ENCODE measurements at regions of chr16 and their contacts with region 1.

Region 1: DNA sequence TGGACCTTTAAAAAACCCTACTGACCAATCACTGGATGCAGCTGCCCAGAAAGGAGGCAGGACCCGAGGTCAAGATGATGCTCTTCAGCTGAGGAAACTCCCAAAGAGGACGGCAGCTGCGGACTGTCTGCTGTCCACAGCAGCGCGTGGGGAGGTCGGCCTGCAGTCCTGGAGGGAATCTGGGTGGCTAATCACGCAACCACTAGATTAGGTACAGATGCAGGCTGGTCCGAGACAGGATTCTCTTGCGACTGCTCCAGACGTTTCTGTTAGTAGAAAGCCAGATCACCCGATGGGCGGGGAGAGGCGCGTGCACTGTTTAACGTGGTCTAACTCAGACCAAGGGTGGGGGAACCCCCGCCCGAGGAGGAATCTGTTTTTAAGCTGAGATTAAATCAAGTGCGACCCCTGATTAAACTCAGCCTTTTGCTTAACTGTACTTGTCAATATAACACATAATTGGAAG is 8.8 kb downstream of the CTRB2 start:
- DNase-seq: peak; percentile 32
- H3K4me3 ChIP-seq: 0 out of 2 replicates have a peak overlapping the region, but pooled peaks have one; percentile 3
- H3K27me3 ChIP-seq: peaks cover 3% of the 10 kb centered on the region; the same call in 1 of the 2 replicates
- CTCF ChIP-seq: no peak

Region 2: GRCh38 chr16:75179208-75179607 is 19.0 kb before region 1 on chr16:
- CTCF ChIA-PET with region 1: no interaction called
- POLR2A ChIA-PET with region 1: no interaction called
- DNase-seq: no peak
- H3K4me3 ChIP-seq: no peak overlapping the region
- H3K27me3 ChIP-seq: no peaks in the 10 kb centered on the region
- CTCF ChIP-seq: no peak

Region 3: DNA sequence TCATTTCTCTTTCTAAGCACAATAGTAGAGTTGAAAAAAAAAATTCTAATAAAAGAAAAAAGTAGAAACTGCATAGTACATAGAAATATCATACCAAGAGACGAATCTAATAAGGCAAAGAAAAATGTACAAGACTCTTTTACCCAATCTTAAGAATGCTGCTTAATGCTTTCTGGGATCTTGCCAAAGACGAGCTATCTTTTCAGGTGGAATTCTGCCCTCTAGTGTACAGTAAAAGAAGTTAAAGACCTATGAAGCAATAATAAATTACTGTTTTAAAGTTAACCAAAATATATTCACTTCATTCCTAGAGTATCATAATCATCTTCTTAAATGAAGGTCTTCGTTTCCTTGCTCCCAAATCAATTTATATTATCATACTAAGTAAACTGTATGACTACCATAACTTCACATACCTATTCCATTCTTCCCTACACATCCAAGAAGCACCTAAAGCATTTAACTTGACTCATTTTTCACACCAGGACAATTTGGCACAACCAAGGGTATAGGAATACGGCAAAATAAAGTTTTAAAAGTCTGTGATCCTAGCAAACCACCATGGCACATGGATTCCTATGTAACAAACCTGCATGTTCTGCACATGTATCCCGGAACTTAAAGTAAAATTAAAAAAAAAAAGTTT is 187.5 kb after region 1 on chr16:
- CTCF ChIA-PET with region 1: interaction called, 55 read pairs
- POLR2A ChIA-PET with region 1: no interaction called
- DNase-seq: no peak
- H3K4me3 ChIP-seq: no peak overlapping the region
- H3K27me3 ChIP-seq: no peaks in the 10 kb centered on the region
- CTCF ChIP-seq: peak; percentile 41; the same call in 1 of the 2 replicates

Region 4: GRCh38 chr16:75402821-75403475 is 204.8 kb after region 1 on chr16:
- CTCF ChIA-PET with region 1: interaction called, 67 read pairs
- POLR2A ChIA-PET with region 1: interaction called, 6 read pairs
- DNase-seq: no peak
- H3K4me3 ChIP-seq: no peak overlapping the region
- H3K27me3 ChIP-seq: no peaks in the 10 kb centered on the region
- CTCF ChIP-seq: peak; percentile 64

Region 5: GRCh38 chr16:75464130-75464918 is 266.2 kb after region 1 on chr16 and contains the start of gene TMEM170A:
- CTCF ChIA-PET with region 1: interaction called, 52 read pairs
- POLR2A ChIA-PET with region 1: no interaction called
- DNase-seq: peak; percentile 89
- H3K4me3 ChIP-seq: peak within 1 kb of the TSS; percentile 74
- H3K27me3 ChIP-seq: no peaks in the 10 kb centered on the region
- CTCF ChIP-seq: peak; percentile 100
- polyA plus RNA-seq, gene TMEM170A: 5.2 and 8.2 TPM in 2 replicates

Measured in BJ (cell line).